Activated naive CD4-positive, alpha-beta T cell treated with anti-CD3 and anti-CD28 coated beads for 36 hours (primary cell): ENCODE measurements at regions of chr10 and their contacts with region 1.

Region 1: DNA sequence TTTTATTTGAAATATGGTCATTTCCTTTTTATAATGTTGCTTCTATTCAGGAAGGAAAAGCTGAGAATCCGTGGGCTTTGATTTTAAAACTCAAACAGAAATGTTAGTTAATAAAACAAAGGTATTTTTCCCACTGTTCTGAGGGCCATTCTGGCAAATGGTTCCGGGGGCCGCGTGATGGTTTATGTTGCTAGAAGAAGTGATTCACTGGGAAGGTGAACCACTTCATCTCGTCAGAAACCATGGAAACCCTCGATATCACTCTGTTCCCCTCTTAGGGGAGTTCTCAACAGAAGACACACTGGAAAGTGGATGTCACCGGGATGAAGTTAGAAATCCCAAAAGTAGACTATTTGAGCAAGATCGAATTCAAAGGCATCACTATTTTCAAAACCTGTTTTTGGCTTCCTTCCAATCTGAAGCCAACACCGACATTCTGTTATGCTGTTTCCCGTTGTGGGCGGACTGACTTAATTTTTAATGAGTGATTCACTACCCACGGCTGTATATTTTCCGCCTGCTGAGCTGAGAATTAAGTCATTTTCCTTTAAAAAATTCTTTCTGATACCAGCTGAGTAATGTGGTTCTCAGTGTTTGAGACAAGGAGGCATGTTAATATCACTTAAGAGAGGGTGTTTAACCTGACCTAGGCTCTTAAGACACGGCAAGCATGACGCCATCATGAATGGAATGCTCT is 84.1 kb downstream of the PTPRE start:
- DNase-seq: peak; percentile 87
- H3K4me3 Mint-ChIP-seq: peak overlapping the region; percentile 32
- H3K27ac Mint-ChIP-seq: peak overlapping the region; percentile 88
- H3K4me1 Mint-ChIP-seq: peaks cover 57% of the 10 kb centered on the region
- H3K27me3 Mint-ChIP-seq: no peaks in the 10 kb centered on the region

Region 2: DNA sequence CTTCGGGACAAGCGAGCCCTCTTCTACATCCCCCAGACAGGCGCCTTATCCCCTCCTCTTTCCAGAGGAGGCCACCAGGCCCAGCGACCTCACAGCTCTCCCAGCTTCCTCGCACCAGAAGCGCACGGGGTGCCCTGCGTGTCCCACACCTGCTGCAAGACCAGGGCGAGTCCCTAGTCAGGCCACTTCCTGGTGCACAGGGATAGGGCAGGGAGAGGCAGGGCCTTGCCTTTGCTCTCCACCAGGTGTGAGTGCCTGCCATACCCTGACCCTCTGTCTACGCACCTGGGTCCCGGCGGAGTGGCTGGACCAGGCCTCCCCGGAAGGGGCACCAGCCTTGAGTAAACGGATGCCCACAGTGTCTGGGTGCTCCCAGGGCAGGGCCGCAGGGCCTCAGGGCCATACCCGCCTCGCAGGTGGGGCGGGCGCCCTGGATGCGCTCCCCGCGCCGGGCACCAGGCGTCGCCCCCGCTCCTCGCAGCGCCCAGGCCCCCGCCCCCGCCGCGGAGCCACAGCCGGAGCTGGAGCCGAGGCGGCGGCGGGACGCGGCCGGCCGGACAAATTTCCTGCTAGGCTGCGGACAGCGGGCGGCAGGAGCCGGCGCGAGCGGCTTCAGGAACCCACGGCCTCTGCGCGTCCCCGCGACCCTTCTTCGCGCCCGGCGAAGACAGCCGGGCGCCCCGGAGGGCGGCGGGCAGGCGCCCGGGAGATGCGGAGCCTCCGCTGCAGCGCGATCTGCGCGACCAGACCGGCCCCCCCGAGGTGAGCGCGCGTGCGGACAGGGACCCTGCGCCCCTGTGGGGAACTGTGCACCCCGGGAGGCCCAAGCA is 84.2 kb before region 1 on chr10 and contains the start of gene PTPRE:
- CTCF ChIA-PET with region 1: interaction called, 3 read pairs
- intact Hi-C with region 1: loop called (anchors 1 kb)
- DNase-seq: peak; percentile 68
- H3K4me3 Mint-ChIP-seq: peak within 1 kb of the TSS; percentile 36
- H3K27ac Mint-ChIP-seq: no peak within 1 kb of the TSS
- H3K4me1 Mint-ChIP-seq: no peaks in the 10 kb centered on the region
- H3K27me3 Mint-ChIP-seq: peaks cover 20% of the 10 kb centered on the region
- total RNA-seq, gene PTPRE: 13.4 to 16.4 TPM

Region 3: GRCh38 chr10:127945335-127945734 is 45.7 kb before region 1 on chr10:
- CTCF ChIA-PET with region 1: no interaction called
- intact Hi-C with region 1: loop called (anchors 1 kb)
- DNase-seq: peak; percentile 66
- H3K4me3 Mint-ChIP-seq: no peak overlapping the region
- H3K27ac Mint-ChIP-seq: peak overlapping the region; percentile 44
- H3K4me1 Mint-ChIP-seq: peaks cover 23% of the 10 kb centered on the region
- H3K27me3 Mint-ChIP-seq: no peaks in the 10 kb centered on the region

Region 4: GRCh38 chr10:128047351-128047750 is 56.4 kb after region 1 on chr10:
- CTCF ChIA-PET with region 1: no interaction called
- intact Hi-C with region 1: loop called (anchors 1 kb)
- DNase-seq: peak; percentile 92
- H3K4me3 Mint-ChIP-seq: peak overlapping the region; percentile 84
- H3K27ac Mint-ChIP-seq: peak overlapping the region; percentile 95
- H3K4me1 Mint-ChIP-seq: peaks cover 44% of the 10 kb centered on the region
- H3K27me3 Mint-ChIP-seq: no peaks in the 10 kb centered on the region

Region 5: GRCh38 chr10:128064108-128064969 is 73.3 kb after region 1 on chr10:
- CTCF ChIA-PET with region 1: interaction called, 4 read pairs
- intact Hi-C with region 1: loop called (anchors 1 kb)
- DNase-seq: peak; percentile 89
- H3K4me3 Mint-ChIP-seq: peak overlapping the region; percentile 26
- H3K27ac Mint-ChIP-seq: peak overlapping the region; percentile 93
- H3K4me1 Mint-ChIP-seq: peaks cover 58% of the 10 kb centered on the region
- H3K27me3 Mint-ChIP-seq: no peaks in the 10 kb centered on the region

Region 6: GRCh38 chr10:128125944-128126764 is 135.2 kb after region 1 on chr10 and contains the start of gene MKI67:
- CTCF ChIA-PET with region 1: no interaction called
- intact Hi-C with region 1: loop called (anchors 1 kb)
- DNase-seq: peak; percentile 95
- H3K4me3 Mint-ChIP-seq: peak within 1 kb of the TSS; percentile 95
- H3K27ac Mint-ChIP-seq: peak within 1 kb of the TSS; percentile 85
- H3K4me1 Mint-ChIP-seq: peaks cover 23% of the 10 kb centered on the region
- H3K27me3 Mint-ChIP-seq: peaks cover 27% of the 10 kb centered on the region
- total RNA-seq, gene MKI67: 266 to 273 TPM

Region 7: GRCh38 chr10:128178319-128178958 is 187.4 kb after region 1 on chr10:
- CTCF ChIA-PET with region 1: no interaction called
- intact Hi-C with region 1: loop called (anchors 1 kb)
- DNase-seq: peak; percentile 64
- H3K4me3 Mint-ChIP-seq: no peak overlapping the region
- H3K27ac Mint-ChIP-seq: no peak overlapping the region
- H3K4me1 Mint-ChIP-seq: peaks cover 20% of the 10 kb centered on the region
- H3K27me3 Mint-ChIP-seq: no peaks in the 10 kb centered on the region